ENCODE measurements at regions of chr1 and their contacts with region 1.

Region 1: DNA sequence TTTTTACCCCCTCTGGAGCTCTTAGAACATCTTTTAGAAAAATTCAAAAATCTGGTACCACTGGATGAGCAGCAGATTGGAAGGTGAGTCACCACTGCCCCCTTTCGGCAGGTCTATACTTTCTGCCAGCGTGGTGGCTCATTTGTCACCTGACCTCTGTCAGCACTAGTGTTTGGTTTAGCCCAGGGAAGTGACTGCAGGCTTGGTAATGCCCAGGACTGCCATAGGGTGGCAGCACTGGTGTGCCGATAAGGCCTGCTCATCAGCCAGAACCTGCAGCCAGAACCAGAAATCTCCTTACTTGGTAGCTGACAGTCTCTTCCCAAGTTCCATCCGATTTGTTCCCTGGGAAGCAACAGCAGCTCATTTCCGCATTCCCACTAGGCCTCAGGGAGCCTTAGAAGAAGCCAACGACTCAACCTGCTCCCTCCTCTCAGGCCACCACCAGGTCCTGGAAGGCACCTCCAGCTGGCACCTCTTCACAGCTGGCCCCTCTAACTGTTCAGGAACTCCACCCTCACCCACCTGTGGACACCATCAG is 6.8 kb downstream of the SMIM12 start:
- DNase-seq: peak; percentile 95
- ATAC-seq: peak; percentile 100
- H3K4me3 Mint-ChIP-seq: no peak overlapping the region
- H3K27ac Mint-ChIP-seq: peak overlapping the region; percentile 17
- H3K4me1 Mint-ChIP-seq: peaks cover 25% of the 10 kb centered on the region
- H3K27me3 Mint-ChIP-seq: no peaks in the 10 kb centered on the region

Region 2: DNA sequence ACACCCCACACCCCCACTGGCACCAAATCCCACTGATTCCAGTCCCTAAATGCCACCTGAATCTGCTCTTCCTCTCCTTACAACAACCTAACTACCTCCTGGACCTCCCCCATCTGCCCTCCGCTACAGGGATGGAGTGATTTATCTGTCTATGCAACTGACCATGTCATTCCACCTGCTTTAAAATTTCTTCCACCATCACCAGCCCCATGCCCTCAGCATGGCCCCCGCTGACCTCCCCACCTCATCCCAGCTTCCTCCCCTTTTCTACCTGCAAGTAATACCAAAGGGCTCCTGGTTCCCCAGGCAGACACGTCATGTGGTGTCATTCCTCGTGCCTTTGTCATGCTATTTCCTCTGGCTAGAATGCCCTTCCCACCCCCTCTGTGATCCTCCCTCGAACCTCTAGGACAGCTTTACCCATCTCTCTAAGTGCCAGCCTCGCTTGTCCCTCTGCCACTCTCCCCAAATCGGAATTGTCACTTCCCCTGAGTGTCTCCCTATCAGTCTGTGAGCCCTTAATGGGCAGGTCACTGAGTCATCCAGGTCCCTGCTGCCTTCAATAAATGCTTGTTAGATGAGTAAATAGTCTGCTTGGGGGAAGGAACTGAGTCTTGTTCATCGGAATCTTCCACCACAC is 89.5 kb before region 1 on chr1:
- CTCF ChIA-PET with region 1: no interaction called
- POLR2A ChIA-PET with region 1: no interaction called
- DNase-seq: no peak
- ATAC-seq: no peak
- H3K4me3 Mint-ChIP-seq: no peak overlapping the region
- H3K27ac Mint-ChIP-seq: no peak overlapping the region
- H3K4me1 Mint-ChIP-seq: no peaks in the 10 kb centered on the region
- H3K27me3 Mint-ChIP-seq: no peaks in the 10 kb centered on the region

Region 3: GRCh38 chr1:34786521-34787325 is 66.0 kb before region 1 on chr1:
- CTCF ChIA-PET with region 1: interaction called, 23 read pairs
- POLR2A ChIA-PET with region 1: no interaction called
- DNase-seq: peak; percentile 78
- ATAC-seq: peak; percentile 82
- H3K4me3 Mint-ChIP-seq: no peak overlapping the region
- H3K27ac Mint-ChIP-seq: no peak overlapping the region
- H3K4me1 Mint-ChIP-seq: peaks cover 2% of the 10 kb centered on the region
- H3K27me3 Mint-ChIP-seq: peaks cover 21% of the 10 kb centered on the region

Region 4: DNA sequence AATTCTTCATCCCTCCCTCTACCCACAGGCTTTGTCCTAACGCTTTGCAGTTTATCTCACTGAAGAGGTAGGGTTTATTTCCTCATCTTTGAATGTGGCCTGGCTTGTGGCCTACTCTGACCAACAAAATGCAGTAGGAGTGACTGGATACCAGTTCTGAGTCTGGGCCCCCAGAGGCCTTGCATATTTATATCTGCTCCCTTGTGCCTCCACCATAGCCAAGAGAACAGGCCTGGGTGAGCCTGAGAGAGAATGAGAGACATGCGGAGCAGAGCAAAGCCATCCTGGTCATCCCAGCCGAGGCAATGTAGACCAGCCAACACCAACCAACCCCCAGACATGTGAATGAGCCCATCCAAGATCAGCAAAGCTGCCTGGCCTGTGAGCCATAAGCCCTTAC is 23.5 kb before region 1 on chr1:
- CTCF ChIA-PET with region 1: interaction called, 11 read pairs
- POLR2A ChIA-PET with region 1: no interaction called
- DNase-seq: no peak
- ATAC-seq: no peak
- H3K4me3 Mint-ChIP-seq: no peak overlapping the region
- H3K27ac Mint-ChIP-seq: no peak overlapping the region
- H3K4me1 Mint-ChIP-seq: no peaks in the 10 kb centered on the region
- H3K27me3 Mint-ChIP-seq: no peaks in the 10 kb centered on the region

Region 5: GRCh38 chr1:34865981-34866761 is 13.4 kb after region 1 on chr1:
- CTCF ChIA-PET with region 1: interaction called, 147 read pairs
- POLR2A ChIA-PET with region 1: interaction called, 8 read pairs
- DNase-seq: peak; percentile 92
- ATAC-seq: peak; percentile 72
- H3K4me3 Mint-ChIP-seq: peak overlapping the region; percentile 75
- H3K27ac Mint-ChIP-seq: peak overlapping the region; percentile 90
- H3K4me1 Mint-ChIP-seq: peaks cover 38% of the 10 kb centered on the region
- H3K27me3 Mint-ChIP-seq: peaks cover 7% of the 10 kb centered on the region

Region 6: DNA sequence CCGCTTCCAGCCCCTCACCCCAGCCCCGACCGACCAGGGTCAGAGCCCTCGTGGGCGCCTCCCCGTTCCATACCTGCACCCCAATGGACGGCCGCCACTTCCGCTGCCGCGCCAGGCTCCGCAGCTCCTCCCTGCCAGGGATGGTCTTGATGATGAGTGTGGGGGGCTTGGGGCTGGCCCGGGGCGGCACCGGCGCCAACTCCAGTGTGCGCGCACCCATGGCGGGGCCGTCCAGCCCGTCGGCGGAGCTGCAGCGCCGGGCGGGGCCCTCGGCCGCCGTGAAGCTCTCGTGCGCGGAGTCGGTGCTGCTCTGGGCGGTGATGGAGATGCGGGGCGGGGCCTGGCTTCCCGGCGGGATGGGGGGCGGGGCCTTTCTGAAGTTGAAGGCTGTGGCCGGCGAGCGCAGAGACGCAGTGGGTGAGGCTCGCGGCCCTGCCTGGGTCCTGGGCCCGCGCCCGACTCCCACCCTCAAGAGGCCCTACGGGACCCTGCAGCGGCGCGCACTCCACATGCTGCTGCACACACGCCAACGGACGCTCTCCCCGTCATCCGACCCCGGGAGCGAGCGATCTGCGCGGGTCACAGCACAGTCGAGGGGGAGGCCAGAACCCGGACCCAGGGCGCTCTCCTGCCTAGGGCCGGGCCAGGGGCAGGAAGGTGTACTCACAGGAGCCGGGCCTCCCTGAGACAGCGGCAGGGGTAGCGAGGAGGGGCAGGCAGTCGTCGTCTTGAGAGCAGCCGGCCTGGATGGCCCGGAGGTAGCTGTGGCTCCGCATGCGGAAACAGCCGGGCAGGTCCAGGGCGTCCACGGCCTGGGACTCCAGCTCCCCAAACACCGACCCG is 32.9 kb after region 1 on chr1:
- CTCF ChIA-PET with region 1: interaction called, 16 read pairs
- POLR2A ChIA-PET with region 1: no interaction called
- DNase-seq: peak; percentile 59
- ATAC-seq: peak; percentile 92
- H3K4me3 Mint-ChIP-seq: peak overlapping the region; percentile 62
- H3K27ac Mint-ChIP-seq: no peak overlapping the region
- H3K4me1 Mint-ChIP-seq: peaks cover 4% of the 10 kb centered on the region
- H3K27me3 Mint-ChIP-seq: peaks cover 43% of the 10 kb centered on the region

Region 7: DNA sequence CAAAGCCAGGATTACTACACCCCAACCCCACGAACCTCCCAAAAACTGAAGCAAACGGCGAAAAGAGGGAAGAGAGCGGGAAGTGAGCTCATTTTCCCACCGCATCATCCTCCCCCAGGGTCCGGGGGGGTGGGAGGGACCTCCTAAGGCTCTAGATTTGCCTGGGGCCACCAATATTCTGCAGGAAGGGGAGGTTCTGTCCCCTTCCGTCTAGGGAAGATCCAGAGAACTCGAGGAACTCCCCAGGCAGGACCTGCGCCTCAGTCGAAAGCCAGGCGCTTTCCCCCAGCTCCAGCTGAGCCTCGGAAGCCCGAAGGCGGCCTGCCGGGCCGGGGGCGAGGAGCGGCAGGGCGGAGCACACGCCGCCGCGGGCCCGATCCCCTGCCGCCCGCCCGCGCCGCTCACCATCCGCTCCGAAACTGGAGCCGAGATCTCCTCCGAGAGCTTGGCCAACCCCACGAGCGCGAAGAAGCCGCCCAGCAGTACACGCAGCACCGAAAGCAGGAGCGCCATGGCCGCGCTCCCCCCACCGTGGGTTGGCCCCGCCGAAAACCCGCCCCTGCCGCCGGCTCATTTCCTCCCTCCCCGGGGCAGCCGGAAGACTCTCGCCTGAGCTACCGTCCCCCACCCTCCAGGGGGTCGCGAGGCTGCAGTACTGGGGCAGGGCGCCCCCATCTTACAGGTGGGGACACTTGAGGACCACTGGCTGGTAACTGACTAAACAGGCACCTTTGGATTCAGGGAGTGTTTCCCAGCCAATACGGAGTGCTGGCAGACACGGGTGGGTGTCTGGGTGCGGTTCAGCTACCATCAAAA is 132.3 kb after region 1 on chr1 and contains the start of gene TMEM35B:
- CTCF ChIA-PET with region 1: interaction called, 14 read pairs
- POLR2A ChIA-PET with region 1: interaction called, 8 read pairs
- DNase-seq: peak; percentile 86
- ATAC-seq: peak; percentile 98
- H3K4me3 Mint-ChIP-seq: peak within 1 kb of the TSS; percentile 98
- H3K27ac Mint-ChIP-seq: peak within 1 kb of the TSS; percentile 96
- H3K4me1 Mint-ChIP-seq: peaks cover 31% of the 10 kb centered on the region
- H3K27me3 Mint-ChIP-seq: no peaks in the 10 kb centered on the region
- total RNA-seq, gene TMEM35B: 24.8 to 26.7 TPM

Region 8: GRCh38 chr1:35184495-35185199 is 331.9 kb after region 1 on chr1:
- CTCF ChIA-PET with region 1: interaction called, 11 read pairs
- POLR2A ChIA-PET with region 1: no interaction called
- DNase-seq: no peak
- ATAC-seq: no peak
- H3K4me3 Mint-ChIP-seq: no peak overlapping the region
- H3K27ac Mint-ChIP-seq: no peak overlapping the region
- H3K4me1 Mint-ChIP-seq: peaks cover 91% of the 10 kb centered on the region
- H3K27me3 Mint-ChIP-seq: no peaks in the 10 kb centered on the region